GM18951 (cell line): ENCODE measurements at regions of chr2 and their contacts with region 1.

Region 1: GRCh38 chr2:119759451-119760236 is at the start of gene PTPN4:
- POLR2A ChIP-seq: peak; percentile 75

Region 2: GRCh38 chr2:120174963-120175581 is 415.4 kb after region 1 on chr2:
- in situ Hi-C with region 1: loop called (anchors 10 kb)
- POLR2A ChIP-seq: no peak